ENCODE measurements at regions of chr1 and their contacts with region 1.

Region 1: GRCh38 chr1:201559679-201560162 is 20.8 kb downstream of the NAV1 start:
- DNase-seq: peak; percentile 83
- CTCF ChIP-seq: peak; percentile 95

Region 2: GRCh38 chr1:201709564-201710295 is 150.0 kb after region 1 on chr1:
- in situ Hi-C with region 1: loop called (anchors 10 kb)
- DNase-seq: peak; percentile 80
- CTCF ChIP-seq: peak; percentile 91

Region 3: GRCh38 chr1:201807958-201808632 is 248.4 kb after region 1 on chr1:
- in situ Hi-C with region 1: loop called (anchors 10 kb)
- DNase-seq: no peak
- CTCF ChIP-seq: no peak

Measured in GM13977 (cell line).